ENCODE measurements at regions of chr5 and their contacts with region 1.

Region 1: DNA sequence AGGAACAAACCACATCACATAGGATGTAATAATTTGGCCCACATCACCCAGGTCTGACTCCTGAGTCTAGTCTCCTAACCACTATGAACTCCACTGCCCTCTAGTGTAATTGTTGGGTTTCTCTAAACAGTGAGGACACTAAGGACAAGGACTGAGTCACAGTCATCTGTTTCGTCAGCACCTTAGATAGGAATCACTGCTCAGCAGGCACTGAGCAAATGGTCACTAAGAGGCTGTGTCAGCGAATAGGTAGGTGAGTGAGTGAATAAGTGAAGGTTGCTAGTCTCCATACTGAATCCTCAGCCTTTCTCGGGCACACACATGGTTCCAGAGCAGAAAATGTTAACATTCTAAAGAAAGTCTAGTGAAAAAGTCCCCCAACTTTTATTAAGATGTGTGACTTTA is 278.6 kb downstream of the SPOCK1 start:
- DNase-seq: peak; percentile 76
- ATAC-seq: peak; percentile 100
- H3K4me3 ChIP-seq: no peak overlapping the region
- H3K27ac ChIP-seq: no peak overlapping the region
- H3K4me1 ChIP-seq: peaks cover 0 to 12% of the 10 kb centered on the region in 2 experiments; a peak in 1 of 4 replicates
- H3K27me3 ChIP-seq: peaks cover 25% of the 10 kb centered on the region
- CTCF ChIP-seq: peak; percentile 43 to 69 (median 57); a peak in 4 of 6 replicates
- POLR2A ChIP-seq: no peak
- RAD21 ChIP-seq: peak; percentile 64

Region 2: GRCh38 chr5:136802383-136802782 is 418.1 kb before region 1 on chr5:
- CTCF ChIA-PET with region 1: no interaction called
- POLR2A ChIA-PET with region 1: no interaction called
- RAD21 ChIA-PET with region 1: no interaction called
- intact Hi-C with region 1: loop called (anchors 5 kb)
- DNase-seq: no peak
- ATAC-seq: no peak; the same call in 1 of the 2 replicates
- H3K4me3 ChIP-seq: no peak overlapping the region
- H3K27ac ChIP-seq: no peak overlapping the region
- H3K4me1 ChIP-seq: no peaks in the 10 kb centered on the region
- H3K27me3 ChIP-seq: 0 out of 2 replicates have a peak, but pooled peaks cover 3% of the 10 kb centered on the region
- CTCF ChIP-seq: peak in 2 of 3 experiments; percentile 25 to 33; a peak in 2 of 6 replicates
- POLR2A ChIP-seq: no peak
- RAD21 ChIP-seq: peak; percentile 57

Region 3: GRCh38 chr5:137075163-137075970 is 145.2 kb before region 1 on chr5:
- CTCF ChIA-PET with region 1: no interaction called
- POLR2A ChIA-PET with region 1: no interaction called
- RAD21 ChIA-PET with region 1: interaction called in 1 of 2 experiments, 4 read pairs
- intact Hi-C with region 1: loop called (anchors 1 kb)
- DNase-seq: peak; percentile 69
- ATAC-seq: peak; percentile 99
- H3K4me3 ChIP-seq: no peak overlapping the region
- H3K27ac ChIP-seq: no peak overlapping the region
- H3K4me1 ChIP-seq: peaks cover 13 to 14% of the 10 kb centered on the region in 2 experiments; a peak in 3 of 4 replicates
- H3K27me3 ChIP-seq: peaks cover 54% of the 10 kb centered on the region
- CTCF ChIP-seq: peak; percentile 66 to 93 (median 93); a peak in 5 of 6 replicates
- POLR2A ChIP-seq: no peak
- RAD21 ChIP-seq: peak; percentile 60

Measured in HCT116 (cell line).